ENCODE measurements at regions of chr20 and their contacts with region 1.

Region 1: GRCh38 chr20:58870239-58871014 is 17.9 kb downstream of the GNAS start:
- DNase-seq: peak; percentile 43
- ATAC-seq: peak; percentile 92
- H3K4me3 ChIP-seq: no peak overlapping the region
- H3K27ac ChIP-seq: no peak overlapping the region
- H3K4me1 ChIP-seq: no peaks in the 10 kb centered on the region
- H3K27me3 ChIP-seq: no peaks in the 10 kb centered on the region; the same call in 1 of the 2 replicates
- CTCF ChIP-seq: peak; percentile 92

Region 2: GRCh38 chr20:59222253-59223181 is 352.1 kb after region 1 on chr20:
- CTCF ChIA-PET with region 1: interaction called, 3 read pairs
- POLR2A ChIA-PET with region 1: no interaction called
- in situ Hi-C with region 1: no loop called
- intact Hi-C with region 1: loop called (anchors 2 kb)
- DNase-seq: no peak
- ATAC-seq: peak; percentile 96
- H3K4me3 ChIP-seq: peak overlapping the region; percentile 38 to 43
- H3K27ac ChIP-seq: no peak overlapping the region
- H3K4me1 ChIP-seq: peaks cover 4% of the 10 kb centered on the region
- H3K27me3 ChIP-seq: peaks cover 55% of the 10 kb centered on the region
- CTCF ChIP-seq: peak; percentile 98

Region 3: GRCh38 chr20:59455402-59456341 is 585.2 kb after region 1 on chr20:
- CTCF ChIA-PET with region 1: interaction called, 7 read pairs
- POLR2A ChIA-PET with region 1: no interaction called
- in situ Hi-C with region 1: no loop called
- intact Hi-C with region 1: loop called (anchors 2 kb)
- DNase-seq: no peak
- ATAC-seq: peak; percentile 71
- H3K4me3 ChIP-seq: no peak overlapping the region
- H3K27ac ChIP-seq: no peak overlapping the region
- H3K4me1 ChIP-seq: no peaks in the 10 kb centered on the region
- H3K27me3 ChIP-seq: peaks cover 4% of the 10 kb centered on the region; the same call in 1 of the 2 replicates
- CTCF ChIP-seq: peak; percentile 81

Region 4: GRCh38 chr20:59474619-59475018 is 604.2 kb after region 1 on chr20:
- CTCF ChIA-PET with region 1: interaction called, 12 read pairs
- POLR2A ChIA-PET with region 1: no interaction called
- in situ Hi-C with region 1: no loop called
- intact Hi-C with region 1: no loop called
- DNase-seq: no peak
- ATAC-seq: no peak
- H3K4me3 ChIP-seq: no peak overlapping the region
- H3K27ac ChIP-seq: no peak overlapping the region
- H3K4me1 ChIP-seq: no peaks in the 10 kb centered on the region
- H3K27me3 ChIP-seq: peaks cover 9% of the 10 kb centered on the region; the same call in 1 of the 2 replicates
- CTCF ChIP-seq: no peak